ENCODE measurements at regions of chr3 and their contacts with region 1.

Region 1: GRCh38 chr3:131026321-131027178 is at the starts of genes ASTE1 and NEK11:
- DNase-seq: peak; percentile 77 to 92
- H3K4me3 ChIP-seq: peak within 1 kb of the TSS; percentile 64
- H3K27ac ChIP-seq: peak within 1 kb of the TSS; percentile 45
- H3K4me1 ChIP-seq: peaks cover 18% of the 10 kb centered on the region
- H3K27me3 ChIP-seq: no peaks in the 10 kb centered on the region
- CTCF ChIP-seq: no peak
- total RNA-seq, gene ASTE1: 3.3 and 3.9 TPM in 2 replicates
- total RNA-seq, gene NEK11: 12.5 and 13.2 TPM in 2 replicates

Region 2: DNA sequence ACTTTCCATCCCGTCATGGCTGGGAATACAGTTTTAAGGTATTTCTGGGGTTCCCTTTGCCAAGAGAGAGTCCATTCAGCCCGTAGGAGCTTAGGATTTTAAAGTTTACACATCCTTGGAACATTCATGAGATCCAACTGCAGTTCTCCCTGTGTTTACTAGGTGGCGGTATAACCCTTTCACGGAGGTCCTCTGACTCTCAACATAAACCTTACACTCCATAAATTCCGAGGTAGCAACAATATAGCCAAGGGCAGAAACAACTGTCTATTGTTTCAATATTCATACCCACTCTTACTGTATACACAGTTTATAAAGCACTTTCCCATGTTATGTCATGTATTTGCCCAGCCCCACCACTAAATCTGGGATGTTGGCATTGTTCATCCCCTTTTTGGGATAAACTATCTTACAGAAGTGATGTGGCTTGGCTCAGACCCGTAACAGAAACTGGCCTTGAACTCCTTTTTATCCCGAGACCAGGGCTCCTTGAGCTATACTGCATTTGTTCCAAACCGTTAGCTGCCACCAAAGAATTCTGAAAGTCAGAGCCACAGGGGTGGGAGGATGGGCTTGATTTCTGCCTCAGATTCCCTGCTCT is 750.2 kb before region 1 on chr3:
- CTCF ChIA-PET with region 1: no interaction called
- POLR2A ChIA-PET with region 1: no interaction called
- intact Hi-C with region 1: loop called (anchors 10 kb)
- DNase-seq: peak; percentile 11 to 51
- H3K4me3 ChIP-seq: no peak overlapping the region
- H3K27ac ChIP-seq: no peak overlapping the region
- H3K4me1 ChIP-seq: no peaks in the 10 kb centered on the region
- H3K27me3 ChIP-seq: peaks cover 31% of the 10 kb centered on the region
- CTCF ChIP-seq: peak; percentile 91

Region 3: DNA sequence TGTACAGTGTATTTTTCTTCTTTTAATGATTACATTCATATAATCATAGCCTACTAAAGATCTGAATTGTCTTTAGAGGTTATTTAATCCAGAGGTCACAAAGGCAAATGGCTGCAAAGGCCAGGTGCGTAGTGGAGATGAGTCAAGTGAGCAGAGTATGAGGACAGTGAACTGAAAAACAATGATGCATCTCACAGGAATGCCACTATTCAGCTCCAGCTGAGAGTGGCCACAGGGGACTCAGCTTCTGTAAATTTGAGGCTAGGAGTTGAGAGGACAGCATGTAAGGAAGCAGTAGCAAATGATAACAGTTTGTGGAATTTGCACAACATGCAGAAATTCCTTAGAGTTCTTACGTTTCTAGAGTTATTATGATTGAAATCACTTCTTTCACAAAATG is 630.6 kb before region 1 on chr3:
- CTCF ChIA-PET with region 1: no interaction called
- POLR2A ChIA-PET with region 1: no interaction called
- intact Hi-C with region 1: loop called (anchors 2 kb)
- DNase-seq: peak; percentile 58 to 79
- H3K4me3 ChIP-seq: no peak overlapping the region
- H3K27ac ChIP-seq: no peak overlapping the region
- H3K4me1 ChIP-seq: peaks cover 19% of the 10 kb centered on the region
- H3K27me3 ChIP-seq: 0 out of 2 replicates have a peak, but pooled peaks cover 6% of the 10 kb centered on the region
- CTCF ChIP-seq: no peak

Region 4: GRCh38 chr3:130699765-130700164 is 326.8 kb before region 1 on chr3:
- CTCF ChIA-PET with region 1: no interaction called
- POLR2A ChIA-PET with region 1: no interaction called
- intact Hi-C with region 1: loop called (anchors 10 kb)
- DNase-seq: peak in 1 of 2 experiments; percentile 42
- H3K4me3 ChIP-seq: no peak overlapping the region
- H3K27ac ChIP-seq: no peak overlapping the region
- H3K4me1 ChIP-seq: no peaks in the 10 kb centered on the region
- H3K27me3 ChIP-seq: no peaks in the 10 kb centered on the region
- CTCF ChIP-seq: peak; percentile 60

Region 5: DNA sequence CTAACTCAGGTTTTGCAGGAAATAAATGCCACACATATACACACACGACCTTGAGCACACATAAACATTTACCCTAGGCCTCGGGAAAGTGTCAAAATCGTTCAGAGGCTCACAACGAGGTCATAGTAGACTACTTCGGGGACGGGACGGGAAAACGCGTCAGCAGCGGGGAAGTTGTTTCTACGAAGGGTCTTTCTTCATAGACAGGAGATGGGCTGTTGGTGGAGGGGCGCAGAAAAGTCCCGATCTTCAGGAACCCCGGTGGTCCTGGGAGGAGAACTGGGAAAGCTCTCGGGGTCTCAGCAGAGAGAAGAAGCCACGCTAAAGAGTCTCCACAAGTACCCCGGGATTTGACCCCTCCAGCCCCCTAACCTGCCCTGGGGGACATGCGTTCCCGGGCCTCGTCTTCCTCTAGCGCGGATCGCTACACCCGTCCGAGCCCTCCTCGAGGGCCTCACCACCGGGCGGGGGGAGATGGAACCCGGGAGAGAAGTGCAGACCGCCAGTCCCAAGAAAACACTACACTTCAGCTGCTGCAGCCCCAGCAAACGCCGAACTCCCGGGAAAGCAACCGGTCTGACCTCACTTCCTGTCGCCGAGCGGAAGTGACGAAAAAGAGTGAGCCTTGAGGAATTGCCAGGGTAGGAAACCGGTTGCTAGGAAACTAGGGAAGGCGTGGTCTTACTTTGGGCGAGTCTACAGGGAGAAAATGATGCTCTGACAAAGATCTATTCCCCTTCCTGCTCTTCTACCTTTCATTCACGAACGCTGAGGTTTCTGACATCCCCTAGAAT is 280.1 kb before region 1 on chr3 and contains the start of gene PIK3R4:
- CTCF ChIA-PET with region 1: no interaction called
- POLR2A ChIA-PET with region 1: no interaction called
- intact Hi-C with region 1: loop called (anchors 5 kb)
- DNase-seq: peak; percentile 93 to 94
- H3K4me3 ChIP-seq: peak within 1 kb of the TSS; percentile 91
- H3K27ac ChIP-seq: peak within 1 kb of the TSS; percentile 45
- H3K4me1 ChIP-seq: peaks cover 9% of the 10 kb centered on the region; the same call in 1 of the 2 replicates
- H3K27me3 ChIP-seq: no peaks in the 10 kb centered on the region
- CTCF ChIP-seq: no peak
- total RNA-seq, gene PIK3R4: 28.7 and 35.2 TPM in 2 replicates

Region 6: GRCh38 chr3:130960139-130960795 is 66.3 kb before region 1 on chr3:
- CTCF ChIA-PET with region 1: no interaction called
- POLR2A ChIA-PET with region 1: no interaction called
- intact Hi-C with region 1: no loop called
- DNase-seq: no peak
- H3K4me3 ChIP-seq: no peak overlapping the region
- H3K27ac ChIP-seq: no peak overlapping the region
- H3K4me1 ChIP-seq: peaks cover 9% of the 10 kb centered on the region
- H3K27me3 ChIP-seq: no peaks in the 10 kb centered on the region
- CTCF ChIP-seq: no peak

Region 7: GRCh38 chr3:131535596-131535995 is 509.0 kb after region 1 on chr3:
- CTCF ChIA-PET with region 1: no interaction called
- POLR2A ChIA-PET with region 1: no interaction called
- intact Hi-C with region 1: no loop called
- DNase-seq: no peak
- H3K4me3 ChIP-seq: no peak overlapping the region
- H3K27ac ChIP-seq: no peak overlapping the region
- H3K4me1 ChIP-seq: no peaks in the 10 kb centered on the region
- H3K27me3 ChIP-seq: no peaks in the 10 kb centered on the region
- CTCF ChIP-seq: no peak